Sigmoid colon (tissue), 7 donors: ENCODE measurements at regions of chr15 and their contacts with region 1.

Region 1: DNA sequence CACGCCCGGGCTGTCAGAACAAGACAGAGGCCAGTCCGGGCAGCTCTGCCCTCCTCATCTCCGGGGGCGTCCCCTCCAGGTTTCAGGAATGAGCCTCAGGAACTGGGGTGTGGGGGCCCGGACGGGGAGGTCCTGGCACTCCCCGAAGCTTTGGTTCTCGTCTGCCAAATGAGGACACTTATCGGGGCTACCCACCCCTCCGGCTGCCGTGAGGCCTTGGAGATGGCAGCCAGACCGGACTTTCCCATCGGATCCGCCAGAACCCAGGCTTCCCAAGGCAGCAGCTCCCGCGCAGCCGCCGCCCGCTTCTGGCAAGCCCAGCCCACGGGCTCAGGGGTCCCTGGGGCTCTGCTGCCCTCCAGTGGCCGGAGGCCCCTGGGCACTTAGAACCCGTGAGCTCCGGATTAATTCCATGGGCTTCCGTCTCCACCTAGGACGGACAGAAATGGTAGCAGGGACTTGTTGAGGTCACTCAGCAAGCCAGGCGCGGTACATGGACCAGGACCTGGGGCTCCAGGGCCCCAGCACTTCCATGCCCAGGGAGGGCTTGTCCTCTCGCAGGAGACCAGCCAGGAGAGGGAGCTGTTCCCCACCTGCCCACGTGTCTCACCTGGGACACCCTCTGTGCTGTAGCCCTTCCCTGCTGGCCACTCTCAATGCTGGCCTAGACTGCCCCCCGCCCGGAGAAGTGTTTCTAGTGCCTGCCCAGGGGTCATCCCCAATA is 89.4 kb downstream of the LINGO1 start:
- DNase-seq: peak; percentile 93
- H3K4me3 ChIP-seq: peak overlapping the region; percentile 18 to 45 (median 42)
- H3K27ac ChIP-seq: peak overlapping the region; percentile 22 to 52 (median 44)
- H3K4me1 ChIP-seq: peaks cover 0 to 15% (median 13%) of the 10 kb centered on the region in 4 donors
- H3K27me3 ChIP-seq: no peaks in the 10 kb centered on the region
- CTCF ChIP-seq: peak; percentile 94 to 97 (median 97)
- EP300 ChIP-seq: no peak
- POLR2A ChIP-seq: no peak

Region 2: GRCh38 chr15:77024271-77025082 is 518.8 kb before region 1 on chr15:
- intact Hi-C with region 1: loop called (anchors 1 kb)
- DNase-seq: peak; percentile 78
- H3K4me3 ChIP-seq: no peak overlapping the region
- H3K27ac ChIP-seq: no peak overlapping the region
- H3K4me1 ChIP-seq: peaks cover 0 to 13% (median 11%) of the 10 kb centered on the region in 4 donors
- H3K27me3 ChIP-seq: peaks cover 0 to 5% (median 4%) of the 10 kb centered on the region in 3 donors
- CTCF ChIP-seq: peak; percentile 73 to 97 (median 91)
- EP300 ChIP-seq: no peak
- POLR2A ChIP-seq: no peak

Region 3: GRCh38 chr15:77118882-77119321 is 424.4 kb before region 1 on chr15:
- intact Hi-C with region 1: loop called (anchors 1 kb)
- DNase-seq: no peak
- H3K4me3 ChIP-seq: no peak overlapping the region
- H3K27ac ChIP-seq: no peak overlapping the region
- H3K4me1 ChIP-seq: peaks cover 0 to 12% (median 7%) of the 10 kb centered on the region in 4 donors
- H3K27me3 ChIP-seq: no peaks in the 10 kb centered on the region
- CTCF ChIP-seq: peak in 3 of 4 experiments; percentile 45 to 69 (median 64)
- EP300 ChIP-seq: no peak
- POLR2A ChIP-seq: no peak

Region 4: GRCh38 chr15:77186594-77187011 is 356.7 kb before region 1 on chr15:
- intact Hi-C with region 1: loop called (anchors 5 kb)
- DNase-seq: no peak
- H3K4me3 ChIP-seq: no peak overlapping the region
- H3K27ac ChIP-seq: peak overlapping the region; percentile 30 to 68 (median 50)
- H3K4me1 ChIP-seq: peaks cover 0 to 18% (median 15%) of the 10 kb centered on the region in 4 donors
- H3K27me3 ChIP-seq: no peaks in the 10 kb centered on the region
- CTCF ChIP-seq: peak; percentile 22 to 41 (median 32)
- EP300 ChIP-seq: no peak
- POLR2A ChIP-seq: no peak